Panc1 (cell line): ENCODE measurements at regions of chr11 and their contacts with region 1.

Region 1: DNA sequence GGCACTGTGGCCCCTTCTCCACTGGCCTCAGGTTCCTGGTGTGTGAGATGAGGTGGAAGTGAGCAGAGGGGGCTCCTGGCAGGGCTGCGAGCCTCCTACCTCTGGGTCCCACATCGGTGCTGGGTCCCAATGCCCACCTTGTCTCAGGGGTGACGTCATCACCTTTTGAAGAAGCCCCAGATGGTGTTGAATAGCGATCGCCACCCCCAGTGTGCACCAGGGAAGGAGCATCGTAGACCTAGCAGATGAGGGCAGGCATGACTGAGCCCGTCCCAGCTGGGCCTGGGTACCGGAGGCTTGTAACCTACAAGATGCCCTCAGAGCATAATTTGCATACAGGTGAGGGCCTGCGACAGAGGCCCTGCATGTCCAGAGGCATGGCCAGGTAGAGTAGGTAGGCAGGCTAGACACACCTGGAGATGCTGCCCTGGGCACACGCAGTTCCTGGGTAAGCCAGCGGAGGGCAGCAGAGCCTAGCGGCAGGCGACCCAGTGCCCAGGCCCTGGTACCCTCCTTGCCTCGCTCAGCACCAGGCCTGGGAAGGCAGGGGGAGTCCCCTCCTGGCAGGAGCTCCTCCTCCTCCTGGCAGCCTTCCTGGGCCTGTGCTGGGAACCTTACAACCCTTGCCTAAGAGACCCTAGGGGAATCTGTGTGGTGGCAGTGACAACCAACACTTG is 52.5 kb downstream of the TPCN2 start:
- DNase-seq: peak; percentile 67
- ATAC-seq: peak; percentile 85
- H3K4me3 ChIP-seq: no peak overlapping the region
- H3K27ac ChIP-seq: no peak overlapping the region
- H3K4me1 ChIP-seq: peaks cover 35% of the 10 kb centered on the region
- H3K27me3 ChIP-seq: no peaks in the 10 kb centered on the region
- CTCF ChIP-seq: peak; percentile 100

Region 2: GRCh38 chr11:69080257-69080995 is 20.8 kb before region 1 on chr11:
- CTCF ChIA-PET with region 1: no interaction called
- POLR2A ChIA-PET with region 1: no interaction called
- in situ Hi-C with region 1: no loop called
- intact Hi-C with region 1: no loop called
- DNase-seq: no peak
- ATAC-seq: no peak
- H3K4me3 ChIP-seq: no peak overlapping the region
- H3K27ac ChIP-seq: no peak overlapping the region
- H3K4me1 ChIP-seq: no peaks in the 10 kb centered on the region
- H3K27me3 ChIP-seq: no peaks in the 10 kb centered on the region
- CTCF ChIP-seq: no peak

Region 3: GRCh38 chr11:69211920-69212571 is 110.8 kb after region 1 on chr11:
- CTCF ChIA-PET with region 1: no interaction called
- POLR2A ChIA-PET with region 1: no interaction called
- in situ Hi-C with region 1: no loop called
- intact Hi-C with region 1: loop called (anchors 10 kb)
- DNase-seq: no peak
- ATAC-seq: no peak
- H3K4me3 ChIP-seq: no peak overlapping the region
- H3K27ac ChIP-seq: no peak overlapping the region
- H3K4me1 ChIP-seq: no peaks in the 10 kb centered on the region; the same call in 1 of the 2 replicates
- H3K27me3 ChIP-seq: no peaks in the 10 kb centered on the region
- CTCF ChIP-seq: no peak; the same call in 1 of the 2 replicates

Region 4: DNA sequence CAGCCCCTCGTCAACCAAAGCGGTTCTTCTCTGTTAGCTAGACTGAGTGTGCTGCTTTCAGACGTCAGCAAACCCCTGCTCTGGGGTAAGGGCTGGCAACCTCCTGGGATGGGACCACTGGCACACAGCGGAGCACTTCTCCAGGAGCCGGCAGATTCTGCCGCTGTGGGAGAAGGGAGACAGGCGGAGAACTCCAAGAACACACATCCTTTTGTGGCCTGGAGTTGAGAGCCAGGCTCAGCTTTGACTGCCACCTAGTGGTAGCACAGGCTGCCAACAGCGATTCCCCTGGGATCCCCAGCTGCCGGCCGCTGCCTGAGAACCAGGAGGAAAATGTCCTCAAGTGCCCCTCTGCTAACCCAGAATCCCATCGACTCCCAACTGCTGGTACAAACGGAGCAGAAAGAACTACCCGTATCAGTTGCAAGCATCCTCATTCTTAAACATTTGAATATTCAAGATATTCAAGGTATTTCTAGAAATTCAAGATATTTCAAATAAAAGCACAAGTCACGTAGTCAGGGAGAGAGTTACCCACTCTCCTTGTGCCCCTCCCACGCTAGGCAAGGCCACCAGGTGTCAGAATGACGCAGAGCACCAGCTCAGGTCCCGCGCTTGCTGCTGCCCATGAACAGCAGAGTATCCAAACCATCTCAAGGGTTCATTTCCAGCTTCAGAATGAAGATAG is 569.0 kb after region 1 on chr11:
- CTCF ChIA-PET with region 1: no interaction called
- POLR2A ChIA-PET with region 1: interaction called, 8 read pairs
- in situ Hi-C with region 1: no loop called
- intact Hi-C with region 1: loop called (anchors 10 kb)
- DNase-seq: peak; percentile 67
- ATAC-seq: peak; percentile 79
- H3K4me3 ChIP-seq: no peak overlapping the region
- H3K27ac ChIP-seq: peak overlapping the region; percentile 55
- H3K4me1 ChIP-seq: peaks cover 13% of the 10 kb centered on the region
- H3K27me3 ChIP-seq: no peaks in the 10 kb centered on the region
- CTCF ChIP-seq: peak; percentile 99